AG04449 (cell line): ENCODE measurements at regions of chr9 and their contacts with region 1.

Region 1: DNA sequence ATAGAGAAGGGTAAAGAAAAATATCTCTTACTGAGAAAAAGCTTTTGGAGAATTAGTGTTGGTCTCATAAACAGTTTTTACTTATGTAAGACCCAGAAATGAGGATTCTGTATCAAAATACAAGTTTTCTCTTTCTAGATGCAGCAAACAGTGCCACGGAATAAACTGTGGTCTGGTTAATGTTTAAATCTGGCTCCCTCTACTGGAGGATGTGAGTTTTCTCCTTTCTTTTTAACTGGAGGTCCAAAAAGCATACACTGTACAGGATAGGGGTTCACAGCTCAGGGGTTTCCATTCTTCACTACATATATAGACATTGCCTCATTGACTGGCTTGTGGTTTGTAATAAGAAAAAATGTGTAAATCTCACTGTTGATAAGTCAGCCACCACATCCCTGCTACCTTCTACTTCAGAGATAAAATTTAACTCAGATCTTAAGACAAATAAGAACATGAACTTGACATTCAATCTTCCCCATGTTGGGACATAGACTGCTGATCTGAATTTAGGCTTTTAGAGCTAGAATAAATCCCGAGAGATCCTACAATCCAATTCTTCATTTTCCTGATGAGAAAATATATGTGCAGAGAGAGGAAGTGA is 98.9 kb downstream of the CFAP95 start:
- DNase-seq: no peak
- H3K4me3 ChIP-seq: no peak overlapping the region
- CTCF ChIP-seq: peak; percentile 54

Region 2: GRCh38 chr9:69131682-69132081 is 787.9 kb before region 1 on chr9:
- CTCF ChIA-PET with region 1: no interaction called
- POLR2A ChIA-PET with region 1: no interaction called
- DNase-seq: peak; percentile 89
- H3K4me3 ChIP-seq: no peak overlapping the region
- CTCF ChIP-seq: no peak

Region 3: GRCh38 chr9:69672596-69673310 is 246.8 kb before region 1 on chr9:
- CTCF ChIA-PET with region 1: interaction called, 42 read pairs
- POLR2A ChIA-PET with region 1: no interaction called
- DNase-seq: peak; percentile 33
- H3K4me3 ChIP-seq: peak overlapping the region; percentile 82
- CTCF ChIP-seq: peak; percentile 99

Region 4: GRCh38 chr9:69689991-69690538 is 229.5 kb before region 1 on chr9:
- CTCF ChIA-PET with region 1: no interaction called
- POLR2A ChIA-PET with region 1: no interaction called
- DNase-seq: no peak
- H3K4me3 ChIP-seq: no peak overlapping the region
- CTCF ChIP-seq: no peak

Region 5: GRCh38 chr9:69809304-69809863 is 110.2 kb before region 1 on chr9:
- CTCF ChIA-PET with region 1: interaction called, 36 read pairs
- POLR2A ChIA-PET with region 1: no interaction called
- DNase-seq: no peak
- H3K4me3 ChIP-seq: no peak overlapping the region
- CTCF ChIP-seq: peak; percentile 18

Region 6: DNA sequence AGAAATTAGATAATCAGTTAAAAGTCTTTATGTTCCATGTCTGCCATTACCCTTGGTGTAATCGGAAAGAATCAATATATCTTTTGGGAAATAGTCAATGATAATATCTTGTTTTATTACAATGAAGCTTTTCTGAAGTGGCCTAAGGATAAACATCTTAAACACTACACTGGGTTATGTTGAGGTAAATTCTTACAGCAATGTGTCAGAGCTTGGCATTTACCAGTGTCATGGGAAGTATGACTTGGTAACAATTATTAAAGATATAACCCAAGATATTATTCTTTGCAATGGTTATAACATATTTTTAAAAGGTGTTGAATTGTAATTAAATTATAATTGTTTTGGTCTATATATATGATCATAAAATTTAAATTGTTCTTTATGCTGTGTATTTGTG is 14.3 kb before region 1 on chr9:
- CTCF ChIA-PET with region 1: interaction called, 34 read pairs
- POLR2A ChIA-PET with region 1: no interaction called
- DNase-seq: no peak
- H3K4me3 ChIP-seq: no peak overlapping the region
- CTCF ChIP-seq: no peak

Region 7: DNA sequence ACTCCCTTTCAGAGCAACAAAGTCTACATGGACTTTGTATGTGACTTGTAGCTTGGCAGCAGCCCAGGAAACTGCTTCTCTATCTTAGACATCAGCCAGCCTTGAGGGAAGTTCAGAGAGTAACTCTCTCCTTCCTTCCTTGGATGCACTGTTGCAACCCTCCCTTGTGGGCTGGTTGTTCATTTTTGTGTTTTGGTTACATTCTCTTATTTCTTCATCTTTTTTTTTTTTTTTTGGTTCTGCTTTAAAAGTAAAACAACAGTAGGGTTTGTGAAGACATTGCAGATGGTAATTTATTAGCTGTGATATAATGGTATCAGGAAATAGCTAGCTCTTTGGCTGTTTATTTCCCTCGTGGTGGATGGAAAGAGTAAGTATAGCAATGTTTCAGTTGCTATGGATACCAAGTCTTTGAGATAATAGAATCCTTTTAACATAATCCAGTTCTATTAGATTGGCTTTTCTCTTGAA is 26.1 kb after region 1 on chr9:
- CTCF ChIA-PET with region 1: interaction called, 14 read pairs
- POLR2A ChIA-PET with region 1: no interaction called
- DNase-seq: no peak
- H3K4me3 ChIP-seq: no peak overlapping the region
- CTCF ChIP-seq: no peak